Head of caudate nucleus (tissue), 42 donors: ENCODE measurements at regions of chr16 and their contacts with region 1.

Region 1: DNA sequence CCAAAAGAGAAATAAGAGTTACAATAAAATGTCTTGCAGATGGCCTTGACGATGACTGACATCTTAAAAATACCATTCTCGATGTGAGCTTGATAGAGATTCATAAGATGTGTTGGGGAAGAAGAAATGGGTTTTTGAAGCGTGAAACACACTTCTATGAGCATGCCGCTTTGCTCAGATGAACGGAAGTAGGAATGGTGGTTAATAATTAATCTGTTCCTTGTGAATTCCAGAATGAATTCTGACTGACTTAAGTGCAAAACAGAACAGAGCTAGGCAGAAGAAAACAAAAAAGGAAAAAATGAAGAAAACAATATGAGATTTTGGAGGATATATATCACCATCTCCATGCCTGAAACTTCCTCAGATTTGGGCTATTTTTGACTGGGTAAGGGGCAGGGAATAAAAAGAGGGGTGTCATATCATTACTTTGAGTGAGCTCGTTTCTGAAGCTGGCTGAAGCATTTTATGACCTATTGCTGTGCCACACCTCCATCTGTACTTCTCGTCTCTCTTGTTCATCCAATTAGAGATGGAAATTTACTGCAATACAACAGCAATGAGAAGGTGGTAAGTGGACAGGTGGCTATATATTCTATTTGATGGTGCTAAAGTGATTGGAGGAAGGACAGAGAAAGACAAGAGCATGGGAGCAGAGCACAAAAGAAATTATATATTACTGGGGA is 1152.0 kb upstream of the CDH8 start:
- DNase-seq: no peak

Region 2: DNA sequence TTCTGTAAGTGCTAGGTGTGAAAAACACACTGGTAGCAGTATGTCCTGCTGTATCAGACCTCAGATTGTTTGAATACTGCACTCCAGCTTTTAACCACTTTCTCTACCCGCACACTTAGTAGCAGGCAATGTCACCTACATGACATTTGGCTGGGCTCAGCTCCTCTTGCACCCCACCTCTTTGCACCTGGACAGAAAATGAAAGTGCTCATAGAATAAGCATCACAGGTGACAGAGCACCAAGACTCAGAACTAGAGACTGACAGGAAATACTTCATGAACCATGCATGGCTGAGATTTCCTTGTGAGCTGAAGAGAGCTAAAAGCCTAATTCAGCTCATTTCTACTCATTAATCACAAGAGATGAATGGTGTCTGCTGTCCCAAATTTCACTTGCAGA is 137.8 kb before region 1 on chr16:
- intact Hi-C with region 1: no loop called
- DNase-seq: no peak

Region 3: GRCh38 chr16:63244631-63245030 is 56.4 kb after region 1 on chr16:
- intact Hi-C with region 1: loop called (anchors 10 kb)
- DNase-seq: no peak